Posterior cingulate gyrus (tissue), 11 donors: ENCODE measurements at regions of chr9 and their contacts with region 1.

Region 1: GRCh38 chr9:95127249-95128176 is 190.0 kb downstream of the FANCC start:
- DNase-seq: peak; percentile 78 to 98 (median 90)

Region 2: DNA sequence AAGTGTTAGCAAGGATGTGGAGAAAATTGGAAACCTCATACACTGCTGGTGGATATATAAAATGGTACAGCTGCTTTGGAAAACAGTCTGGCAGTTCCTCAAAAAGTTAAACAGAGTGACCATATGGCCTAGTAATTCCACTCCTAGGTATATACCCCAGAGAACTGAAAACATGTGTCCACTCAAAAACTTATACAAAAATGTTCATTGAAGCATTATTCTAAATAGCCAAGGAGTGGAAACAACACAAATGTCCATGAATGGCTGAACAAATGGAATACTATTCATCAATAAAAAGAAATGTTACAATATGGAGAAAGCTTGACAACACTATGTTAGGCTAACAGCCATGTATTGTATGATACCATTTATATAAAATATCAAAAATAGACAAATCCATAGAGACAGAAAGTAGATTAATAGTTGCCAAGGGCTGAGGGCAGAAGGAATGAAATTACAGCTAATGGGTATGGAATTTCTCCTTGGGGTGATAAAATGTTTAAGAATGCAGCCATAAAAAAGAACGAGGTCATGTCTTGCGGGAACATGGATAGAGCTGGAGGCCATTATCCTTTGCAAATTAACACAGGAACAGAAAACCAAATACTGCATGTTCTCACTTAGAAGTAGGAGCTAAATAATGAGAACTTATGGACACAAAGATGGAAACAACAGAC is 454.6 kb before region 1 on chr9:
- intact Hi-C with region 1: loop called (anchors 1 kb)
- DNase-seq: no peak

Region 3: GRCh38 chr9:94681508-94681907 is 446.0 kb before region 1 on chr9:
- intact Hi-C with region 1: loop called (anchors 2 kb)
- DNase-seq: peak; percentile 36 to 96 (median 80)

Region 4: GRCh38 chr9:94783102-94783664 is 344.3 kb before region 1 on chr9:
- intact Hi-C with region 1: loop called (anchors 1 kb)
- DNase-seq: peak in 9 of 10 donors; percentile 27 to 90 (median 69)

Region 5: DNA sequence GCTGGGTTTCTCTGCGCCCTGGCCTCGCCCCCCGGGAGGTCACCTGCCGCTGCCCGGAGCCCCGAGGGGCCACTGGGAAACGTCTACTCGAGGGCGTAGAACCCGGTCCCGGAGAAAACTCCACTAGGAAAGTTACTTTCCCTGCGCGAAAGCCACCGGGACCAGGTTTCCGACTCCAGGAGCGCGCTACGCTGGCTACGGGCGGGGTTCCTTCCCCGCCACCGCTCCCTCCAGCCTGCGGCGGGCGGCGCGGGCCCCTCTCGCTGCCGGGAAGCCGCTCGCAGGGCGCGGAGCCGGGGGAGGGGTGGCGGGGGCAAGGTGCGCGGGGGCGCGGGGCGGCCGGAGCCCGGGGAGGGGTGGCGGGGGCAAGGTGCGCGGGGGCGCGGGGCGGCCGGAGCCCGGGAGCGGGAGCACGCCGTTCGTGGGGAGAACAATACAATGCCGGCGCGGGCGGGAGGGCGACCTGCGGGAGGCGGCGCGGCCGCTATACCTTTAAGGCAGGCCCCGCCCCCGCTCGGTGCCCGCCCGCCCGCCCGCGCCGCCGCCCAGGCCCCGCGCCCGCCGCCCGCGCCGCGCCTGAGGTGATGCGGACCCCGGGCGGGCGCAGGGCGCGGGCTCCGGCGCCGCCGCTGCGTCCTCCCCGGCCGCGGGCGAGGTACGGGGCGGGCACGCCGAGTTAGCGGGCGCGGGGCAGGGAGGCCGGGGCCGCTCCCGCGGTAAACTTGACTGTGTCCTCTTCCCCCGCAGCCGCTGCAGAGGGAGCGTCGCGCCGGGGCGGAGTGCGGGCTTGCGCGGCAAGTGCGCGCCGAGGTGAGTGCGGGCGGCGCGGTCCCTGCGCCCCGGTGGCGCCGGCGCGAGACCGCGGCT is 122.9 kb before region 1 on chr9:
- intact Hi-C with region 1: loop called (anchors 10 kb)
- DNase-seq: peak in 3 of 10 donors; percentile 63 to 91 (median 83)

Region 6: DNA sequence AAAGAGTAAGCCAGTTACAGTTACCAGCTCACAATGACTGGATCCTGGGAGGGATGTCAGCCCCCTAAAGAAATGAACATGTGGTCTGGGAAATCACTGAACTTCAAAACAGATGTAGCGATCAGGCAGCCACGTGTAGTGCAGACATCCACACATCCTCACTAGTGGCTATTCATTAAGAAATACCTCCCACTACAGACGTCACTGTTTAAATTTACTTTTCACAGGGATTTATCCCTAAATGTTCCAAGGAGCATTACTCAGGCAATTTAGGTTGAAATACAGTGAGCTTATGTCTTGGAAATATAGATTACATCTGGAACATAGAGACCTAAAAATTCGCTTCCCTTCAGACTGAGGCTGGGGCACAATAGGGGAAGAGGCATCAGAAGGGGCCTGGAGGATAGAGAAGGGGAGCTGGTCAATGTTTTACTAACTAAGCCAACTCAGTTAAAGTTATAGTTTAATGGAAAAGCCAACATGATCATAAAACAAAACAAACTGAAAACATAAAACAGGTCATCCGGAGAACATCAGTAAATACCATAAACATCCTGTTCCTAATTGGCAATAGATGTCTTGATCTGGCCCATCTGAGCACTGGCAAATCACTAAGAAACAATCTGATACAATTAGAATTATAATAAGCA is 97.7 kb after region 1 on chr9:
- intact Hi-C with region 1: no loop called
- DNase-seq: no peak